BJ (cell line): ENCODE measurements at regions of chr16 and their contacts with region 1.

Region 1: DNA sequence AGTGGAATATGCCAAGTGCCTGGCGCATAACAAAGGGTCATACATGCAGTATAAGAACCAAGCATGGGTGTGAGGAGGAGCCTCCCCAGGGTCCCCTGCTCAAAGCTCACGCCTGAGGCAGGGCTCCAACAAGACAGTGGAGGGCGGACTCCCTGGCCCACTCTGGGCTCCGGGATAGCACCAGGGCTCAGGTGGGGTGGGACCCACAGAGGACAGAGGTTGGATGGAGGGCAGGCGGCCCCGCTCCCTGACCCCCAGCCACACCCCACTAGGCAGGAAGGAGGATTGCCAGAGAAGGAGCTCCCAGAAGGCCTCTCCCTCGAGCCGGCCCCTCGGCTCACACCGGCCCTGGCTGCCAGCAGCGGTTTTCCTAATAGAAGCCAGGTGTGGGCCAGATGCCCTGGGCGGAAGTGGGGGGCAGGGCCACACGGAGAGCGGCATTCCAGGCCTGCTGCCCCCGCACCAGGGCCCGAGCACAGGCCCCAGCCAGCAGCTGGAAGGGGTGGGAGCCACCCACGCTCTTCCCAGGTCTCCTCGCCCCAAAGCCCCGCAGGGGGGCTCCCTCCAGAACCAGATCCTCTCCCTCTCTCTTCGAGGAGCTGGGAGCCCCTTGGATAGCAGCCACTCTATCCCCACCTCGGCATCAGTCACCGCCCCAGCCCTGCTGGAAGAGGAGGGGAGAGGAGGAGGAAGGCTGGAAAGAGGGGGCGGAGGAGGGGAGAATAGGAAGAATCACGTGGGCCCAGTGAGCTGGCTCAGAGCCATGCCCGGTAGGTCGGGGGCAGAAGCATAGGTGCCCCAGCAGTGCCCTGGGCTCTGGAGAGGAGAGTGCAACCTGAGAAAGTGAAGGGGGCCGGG is 21.0 kb downstream of the VASN start:
- DNase-seq: no peak
- H3K4me3 ChIP-seq: no peak overlapping the region
- H3K27me3 ChIP-seq: no peaks in the 10 kb centered on the region
- CTCF ChIP-seq: no peak

Region 2: GRCh38 chr16:4194661-4195060 is 197.9 kb before region 1 on chr16:
- CTCF ChIA-PET with region 1: no interaction called
- POLR2A ChIA-PET with region 1: no interaction called
- DNase-seq: no peak
- H3K4me3 ChIP-seq: no peak overlapping the region
- H3K27me3 ChIP-seq: no peaks in the 10 kb centered on the region; the same call in 1 of the 2 replicates
- CTCF ChIP-seq: no peak

Region 3: GRCh38 chr16:4358831-4359561 is 33.6 kb before region 1 on chr16:
- CTCF ChIA-PET with region 1: interaction called, 16 read pairs
- POLR2A ChIA-PET with region 1: no interaction called
- DNase-seq: no peak
- H3K4me3 ChIP-seq: no peak overlapping the region
- H3K27me3 ChIP-seq: no peaks in the 10 kb centered on the region
- CTCF ChIP-seq: peak; percentile 96

Region 4: DNA sequence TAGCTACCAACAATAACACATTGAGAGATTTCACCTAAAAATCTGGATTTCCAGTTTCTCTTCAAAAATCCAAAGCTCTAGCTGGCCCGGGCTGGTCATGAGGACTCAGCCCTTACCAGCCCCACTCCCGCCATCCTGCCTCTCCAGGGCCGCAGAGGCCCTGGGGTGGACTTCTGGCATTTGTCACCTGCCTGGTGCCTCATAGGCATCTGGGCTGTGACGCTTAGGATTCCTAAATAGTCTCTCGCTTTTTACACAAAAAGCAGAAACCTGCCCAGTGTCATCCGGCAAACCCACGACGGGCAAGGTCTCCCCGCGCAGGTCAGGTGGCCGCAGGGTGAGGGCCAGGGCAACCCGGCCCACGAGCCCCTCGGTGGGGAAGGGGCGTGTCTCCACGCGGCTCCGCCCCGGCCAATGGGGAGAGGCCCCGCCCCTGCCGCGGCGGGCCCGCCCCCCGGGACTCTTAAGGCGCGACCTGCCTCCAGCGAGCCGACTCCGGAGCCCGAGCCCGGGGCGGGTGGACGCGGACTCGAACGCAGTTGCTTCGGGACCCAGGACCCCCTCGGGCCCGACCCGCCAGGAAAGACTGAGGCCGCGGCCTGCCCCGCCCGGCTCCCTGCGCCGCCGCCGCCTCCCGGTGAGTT is 21.1 kb before region 1 on chr16 and contains the start of gene VASN:
- CTCF ChIA-PET with region 1: interaction called, 17 read pairs
- POLR2A ChIA-PET with region 1: interaction called, 3 read pairs
- DNase-seq: no peak
- H3K4me3 ChIP-seq: peak within 1 kb of the TSS; percentile 97
- H3K27me3 ChIP-seq: no peaks in the 10 kb centered on the region
- CTCF ChIP-seq: no peak
- polyA plus RNA-seq, gene VASN: 30.0 and 71.6 TPM in 2 replicates

Region 5: GRCh38 chr16:4410335-4411075 is 17.9 kb after region 1 on chr16:
- CTCF ChIA-PET with region 1: interaction called, 120 read pairs
- POLR2A ChIA-PET with region 1: interaction called, 3 read pairs
- DNase-seq: peak; percentile 72
- H3K4me3 ChIP-seq: no peak overlapping the region
- H3K27me3 ChIP-seq: no peaks in the 10 kb centered on the region
- CTCF ChIP-seq: no peak

Region 6: DNA sequence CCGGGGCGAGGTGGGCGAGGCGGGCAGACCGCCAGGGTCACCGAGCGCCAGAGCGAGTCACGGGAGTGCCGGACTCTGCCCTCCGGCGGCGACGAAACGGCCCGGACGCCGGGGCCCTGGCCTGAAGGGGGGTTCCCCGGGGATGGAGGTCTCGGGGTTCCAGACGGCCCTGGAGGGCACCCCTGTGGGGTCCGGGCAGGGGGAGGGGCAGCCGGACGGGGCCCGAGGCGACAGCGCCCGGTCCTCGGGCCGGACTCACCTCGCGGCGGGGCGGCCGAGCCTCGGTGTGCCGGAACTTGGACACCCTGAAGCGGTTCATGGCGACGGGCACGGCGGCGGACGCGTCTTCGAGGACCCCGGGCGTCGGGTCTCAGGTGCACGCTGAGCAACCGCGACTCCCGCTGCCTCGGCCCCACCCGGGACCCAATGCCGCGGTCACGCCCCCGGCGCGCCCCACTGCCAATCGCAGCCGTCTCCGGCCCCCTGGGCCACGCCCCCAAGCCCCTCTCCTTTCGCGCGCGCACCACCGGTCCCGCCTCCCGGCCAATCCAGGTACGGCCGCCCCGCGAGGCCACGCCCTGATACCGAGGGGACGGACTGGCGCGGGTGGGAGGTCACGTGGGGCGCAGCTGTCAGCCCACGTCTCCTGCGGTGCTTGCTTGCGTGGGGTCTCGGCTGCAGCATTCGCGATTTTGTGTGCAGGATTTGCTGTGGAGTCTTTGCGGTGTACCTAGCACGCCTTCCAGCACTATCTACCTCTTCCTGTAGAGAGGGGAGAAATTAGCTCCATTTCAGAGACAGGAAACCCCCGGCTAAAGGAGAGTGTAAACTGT is 23.8 kb after region 1 on chr16 and contains the start of gene CORO7:
- CTCF ChIA-PET with region 1: no interaction called
- POLR2A ChIA-PET with region 1: interaction called, 16 read pairs
- DNase-seq: peak; percentile 50
- H3K4me3 ChIP-seq: peak within 1 kb of the TSS; percentile 87
- H3K27me3 ChIP-seq: no peaks in the 10 kb centered on the region
- CTCF ChIP-seq: no peak
- polyA plus RNA-seq, gene CORO7: 5.3 and 13.8 TPM in 2 replicates